HepG2 (cell line): ENCODE measurements at regions of chr2 and their contacts with region 1.

Region 1: GRCh38 chr2:85584857-85585783 is 889 bp downstream of the VAMP5 start:
- DNase-seq: peak; percentile 96
- ATAC-seq: peak; percentile 88
- H3K4me3 ChIP-seq: peak overlapping the region; percentile 64 to 83 (median 65)
- H3K27ac ChIP-seq: peak overlapping the region; percentile 99
- H3K4me1 ChIP-seq: peaks cover 80% of the 10 kb centered on the region
- H3K27me3 ChIP-seq: no peaks in the 10 kb centered on the region
- CTCF ChIP-seq: no peak
- EP300 ChIP-seq: peak in 1 of 2 experiments; percentile 82; a peak in 2 of 4 replicates
- POLR2A ChIP-seq: peak; percentile 59 to 70; a peak in 3 of 4 replicates
- RAD21 ChIP-seq: no peak

Region 2: DNA sequence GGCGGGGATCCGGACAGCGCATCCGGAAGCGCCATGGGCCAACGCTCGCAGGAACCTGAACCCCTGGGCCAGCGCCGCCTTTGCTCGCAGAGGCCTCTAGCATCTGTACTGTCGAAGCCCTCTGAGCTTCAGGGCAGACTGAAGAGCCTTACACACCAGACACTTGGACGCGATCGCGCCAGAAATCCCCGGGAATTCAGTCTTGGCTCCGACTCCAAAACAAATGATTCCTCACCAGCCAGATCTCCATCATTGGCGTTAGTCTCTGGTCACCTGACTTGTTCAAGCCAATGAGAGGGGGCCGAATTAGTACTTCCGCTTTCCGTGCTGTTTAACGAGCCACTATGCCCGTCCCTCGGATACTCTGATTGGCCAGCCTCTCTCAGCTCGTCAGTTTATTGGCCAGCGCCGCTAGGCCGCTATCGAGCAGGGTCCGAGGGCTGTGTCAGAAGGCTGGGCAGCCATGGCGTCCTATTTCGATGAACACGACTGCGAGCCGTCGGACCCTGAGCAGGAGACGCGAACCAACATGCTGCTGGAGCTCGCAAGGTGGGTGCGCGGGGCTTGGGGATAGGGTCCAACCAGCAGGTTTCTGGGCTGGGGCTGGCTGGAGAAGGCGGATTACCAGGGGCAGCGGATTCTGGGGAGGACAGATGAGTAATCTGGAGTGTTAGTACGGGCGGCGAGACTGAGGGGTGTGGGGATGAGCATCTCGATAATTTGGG is 10.3 kb after region 1 on chr2 and contains the start of gene RNF181:
- CTCF ChIA-PET with region 1: no interaction called
- POLR2A ChIA-PET with region 1: interaction called, 795 read pairs
- in situ Hi-C with region 1: no loop called
- intact Hi-C with region 1: loop called (anchors 1 kb)
- DNase-seq: peak; percentile 99
- ATAC-seq: peak; percentile 92
- H3K4me3 ChIP-seq: peak within 1 kb of the TSS; percentile 88 to 97 (median 90)
- H3K27ac ChIP-seq: peak within 1 kb of the TSS; percentile 80
- H3K4me1 ChIP-seq: peaks cover 86% of the 10 kb centered on the region
- H3K27me3 ChIP-seq: no peaks in the 10 kb centered on the region; a peak in 1 of 5 replicates
- CTCF ChIP-seq: no peak
- EP300 ChIP-seq: no peak
- POLR2A ChIP-seq: peak in 1 of 2 experiments; percentile 77; a peak in 1 of 4 replicates
- RAD21 ChIP-seq: no peak; the same call in 1 of the 2 replicates
- total RNA-seq, gene RNF181: 224 and 234 TPM in 2 replicates

Region 3: GRCh38 chr2:85602476-85603234 is 17.5 kb after region 1 on chr2 and contains the start of gene TMEM150A:
- CTCF ChIA-PET with region 1: no interaction called
- POLR2A ChIA-PET with region 1: interaction called, 795 read pairs
- in situ Hi-C with region 1: no loop called
- intact Hi-C with region 1: loop called (anchors 1 kb)
- DNase-seq: peak; percentile 87
- ATAC-seq: peak; percentile 90
- H3K4me3 ChIP-seq: peak within 1 kb of the TSS; percentile 84 to 98 (median 91)
- H3K27ac ChIP-seq: peak within 1 kb of the TSS; percentile 80
- H3K4me1 ChIP-seq: peaks cover 85% of the 10 kb centered on the region
- H3K27me3 ChIP-seq: no peaks in the 10 kb centered on the region; a peak in 1 of 5 replicates
- CTCF ChIP-seq: peak; percentile 46
- EP300 ChIP-seq: peak in 1 of 2 experiments; percentile 34; a peak in 1 of 4 replicates
- POLR2A ChIP-seq: peak in 1 of 2 experiments; percentile 66; a peak in 2 of 4 replicates
- RAD21 ChIP-seq: peak; percentile 89
- total RNA-seq, gene TMEM150A: 24.0 and 30.1 TPM in 2 replicates

Region 4: DNA sequence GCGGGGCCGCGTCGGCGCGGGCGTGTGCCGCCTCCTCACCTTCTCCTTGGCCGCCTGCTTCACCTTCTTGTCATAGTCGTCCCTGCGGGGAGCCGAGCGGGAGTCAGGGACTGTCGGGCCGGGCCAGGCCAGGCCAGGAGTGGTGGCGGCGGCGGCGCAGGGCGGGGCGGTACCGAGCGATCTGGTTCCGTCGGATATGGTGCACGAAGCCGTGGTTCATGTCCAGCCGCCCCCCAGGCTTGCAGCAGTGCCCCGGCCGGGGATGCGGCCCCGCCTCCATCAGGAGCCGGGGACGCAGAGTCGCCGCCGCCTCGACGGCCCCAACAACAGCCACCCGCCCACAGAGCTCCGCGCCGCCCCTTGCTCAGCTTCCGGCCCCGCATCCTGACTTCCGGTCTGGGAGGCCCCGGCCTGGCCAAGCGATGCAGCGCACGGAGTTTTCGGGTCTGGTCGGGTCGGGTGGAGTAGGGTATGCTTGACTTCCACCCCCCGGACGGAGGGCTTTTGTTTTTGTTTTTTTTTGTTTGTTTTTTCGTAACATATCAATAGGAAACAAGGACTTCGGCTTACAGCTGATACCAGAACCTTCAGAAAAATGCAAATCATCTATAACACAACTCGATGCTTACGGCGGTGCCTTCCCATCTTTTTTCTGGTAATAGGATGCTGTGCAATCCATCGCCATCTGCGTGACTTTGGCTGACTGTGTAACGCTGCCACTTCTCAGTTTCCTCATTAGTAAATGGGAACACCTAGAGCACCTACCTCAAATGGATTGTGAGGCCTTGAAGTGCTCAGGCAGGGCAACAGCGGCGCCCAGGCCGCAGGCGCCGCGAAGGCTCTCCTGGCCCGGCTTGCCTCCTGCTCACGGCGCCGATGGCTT is 26.8 kb after region 1 on chr2 and contains the start of gene C2orf68:
- CTCF ChIA-PET with region 1: no interaction called
- POLR2A ChIA-PET with region 1: interaction called, 795 read pairs
- in situ Hi-C with region 1: no loop called
- intact Hi-C with region 1: loop called (anchors 2 kb)
- DNase-seq: peak; percentile 86
- ATAC-seq: peak; percentile 85
- H3K4me3 ChIP-seq: peak within 1 kb of the TSS; percentile 92 to 100 (median 95)
- H3K27ac ChIP-seq: peak within 1 kb of the TSS; percentile 58
- H3K4me1 ChIP-seq: peaks cover 69% of the 10 kb centered on the region
- H3K27me3 ChIP-seq: no peaks in the 10 kb centered on the region; a peak in 1 of 5 replicates
- CTCF ChIP-seq: no peak
- EP300 ChIP-seq: no peak
- POLR2A ChIP-seq: peak; percentile 52 to 90; a peak in 3 of 4 replicates
- RAD21 ChIP-seq: peak; percentile 63
- total RNA-seq, gene C2orf68: 47.1 and 49.0 TPM in 2 replicates